ENCODE measurements at regions of chr1 and their contacts with region 1.

Region 1: DNA sequence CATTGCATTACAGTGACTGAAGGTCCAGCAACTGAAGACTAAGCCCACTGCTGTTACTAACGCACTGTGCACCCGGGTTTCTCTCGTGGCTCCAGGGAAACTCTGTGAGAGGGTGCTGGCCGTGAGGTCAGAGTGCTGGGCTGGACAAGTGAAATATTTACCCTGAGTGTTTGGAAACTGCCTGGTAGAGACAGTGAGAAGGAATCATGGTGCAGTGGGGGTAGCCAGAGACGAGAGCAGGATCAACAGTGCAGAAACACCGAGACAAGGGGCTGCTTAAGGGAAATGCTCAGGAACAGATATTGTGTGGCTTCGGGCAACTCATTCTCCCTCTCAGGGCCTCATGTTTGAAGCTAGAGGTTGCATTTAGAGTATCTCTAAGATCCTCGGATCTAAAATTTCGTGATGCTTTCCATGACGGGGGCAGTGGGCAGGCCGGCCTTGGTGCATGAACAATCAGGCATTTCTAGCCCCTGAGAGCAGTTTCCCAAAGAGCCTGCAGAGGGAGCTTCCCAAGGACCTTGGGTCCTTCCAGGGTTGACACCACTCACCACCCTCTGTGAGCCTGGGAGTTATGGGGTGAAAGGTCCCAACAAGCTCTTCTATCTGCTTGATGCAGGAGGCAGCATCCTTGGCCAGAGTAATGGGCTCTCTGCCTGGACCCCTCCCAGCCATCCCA is 9.7 kb downstream of the CD2 start:
- DNase-seq: peak in 3 of 5 donors; percentile 39 to 80 (median 43)
- H3K4me3 ChIP-seq: peak overlapping the region; percentile 10 to 27
- H3K4me3 Mint-ChIP-seq: peak overlapping the region; percentile 76 to 94 (median 84)
- H3K27ac ChIP-seq: peak overlapping the region; percentile 88
- H3K27ac Mint-ChIP-seq: peak overlapping the region; percentile 97 to 99 (median 98)
- H3K4me1 ChIP-seq: peaks cover 97% of the 10 kb centered on the region
- H3K4me1 Mint-ChIP-seq: peaks cover 79 to 100% (median 88%) of the 10 kb centered on the region in 4 donors
- H3K27me3 ChIP-seq: no peaks in the 10 kb centered on the region
- H3K27me3 Mint-ChIP-seq: no peaks in the 10 kb centered on the region

Region 2: DNA sequence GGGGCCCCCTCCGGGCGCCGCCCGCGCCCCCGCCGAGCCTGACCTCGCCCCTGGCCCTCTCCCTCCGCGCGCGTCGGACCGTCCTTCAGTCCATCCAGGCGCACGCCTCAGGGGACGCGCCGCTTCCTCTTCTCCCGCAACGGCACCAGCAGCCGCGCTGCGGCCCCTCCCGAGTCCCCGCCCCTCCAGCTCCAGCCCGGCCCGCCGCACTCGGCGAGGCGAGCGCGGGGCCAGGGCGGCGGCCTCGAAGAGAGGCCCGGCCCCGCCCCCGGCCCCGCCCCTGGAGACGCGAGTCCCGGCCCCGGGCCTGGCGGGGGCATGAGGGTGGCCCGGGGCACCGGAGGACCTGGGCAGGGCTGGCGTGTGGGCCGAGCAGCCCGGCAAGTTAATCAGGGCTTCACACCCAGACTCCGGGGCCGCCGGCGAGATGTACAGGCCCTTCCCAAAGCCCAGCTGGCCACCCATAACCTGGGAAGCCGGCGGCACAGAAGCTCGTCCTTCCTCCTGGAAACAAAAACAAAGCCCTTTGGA is 96.3 kb before region 1 on chr1 and contains the start of gene IGSF3:
- CTCF ChIA-PET with region 1: no interaction called
- POLR2A ChIA-PET with region 1: no interaction called
- intact Hi-C with region 1: no loop called
- DNase-seq: peak; percentile 10 to 41 (median 19)
- H3K4me3 ChIP-seq: peak within 1 kb of the TSS; percentile 64 to 67
- H3K4me3 Mint-ChIP-seq: peak within 1 kb of the TSS; percentile 79 to 86 (median 82)
- H3K27ac ChIP-seq: no peak within 1 kb of the TSS
- H3K27ac Mint-ChIP-seq: peak within 1 kb of the TSS in 4 of 7 donors; percentile 14 to 58 (median 50)
- H3K4me1 ChIP-seq: peaks cover 9% of the 10 kb centered on the region
- H3K4me1 Mint-ChIP-seq: peaks cover 7 to 18% (median 10%) of the 10 kb centered on the region in 4 donors
- H3K27me3 ChIP-seq: peaks cover 12% of the 10 kb centered on the region
- H3K27me3 Mint-ChIP-seq: peaks cover 19 to 24% of the 10 kb centered on the region in 2 donors
- total RNA-seq, gene IGSF3: 0.06 TPM in 1 of 2 experiments, not detected in the other

Region 3: DNA sequence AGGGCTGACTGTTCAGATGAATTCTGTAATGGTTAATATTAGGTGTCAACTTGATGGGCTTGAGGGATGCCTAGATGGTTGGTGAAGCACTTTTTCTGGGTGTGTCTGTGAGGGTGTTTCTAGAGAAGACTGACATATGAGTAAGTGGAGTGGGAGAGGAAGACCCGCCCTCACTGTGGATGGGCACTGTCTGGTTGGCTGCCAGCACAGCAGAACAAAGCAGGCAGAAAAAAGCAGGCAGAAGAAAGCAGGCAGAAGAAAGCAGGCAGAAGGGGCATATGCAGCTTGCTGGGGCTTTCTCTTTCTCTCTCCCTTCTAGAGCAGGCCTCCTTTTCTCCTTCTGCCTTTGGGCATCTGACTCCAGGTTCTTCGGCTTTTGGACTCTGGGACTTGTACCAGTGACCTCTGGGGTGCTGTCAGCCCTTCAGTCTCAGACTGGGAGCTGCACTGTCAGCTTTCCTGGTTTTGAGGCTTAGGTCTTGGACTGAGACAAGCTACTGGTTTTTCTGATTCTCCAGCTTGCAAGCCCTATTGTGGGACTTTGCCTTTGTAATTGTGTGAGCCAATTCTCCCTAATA is 52.6 kb before region 1 on chr1:
- CTCF ChIA-PET with region 1: no interaction called
- POLR2A ChIA-PET with region 1: no interaction called
- intact Hi-C with region 1: no loop called
- DNase-seq: no peak
- H3K4me3 ChIP-seq: no peak overlapping the region
- H3K4me3 Mint-ChIP-seq: no peak overlapping the region
- H3K27ac ChIP-seq: no peak overlapping the region
- H3K27ac Mint-ChIP-seq: no peak overlapping the region
- H3K4me1 ChIP-seq: no peaks in the 10 kb centered on the region
- H3K4me1 Mint-ChIP-seq: peaks cover 0 to 2% (median 0%) of the 10 kb centered on the region in 4 donors
- H3K27me3 ChIP-seq: peaks cover 4% of the 10 kb centered on the region
- H3K27me3 Mint-ChIP-seq: peaks cover 8 to 19% of the 10 kb centered on the region in 2 donors

Region 4: DNA sequence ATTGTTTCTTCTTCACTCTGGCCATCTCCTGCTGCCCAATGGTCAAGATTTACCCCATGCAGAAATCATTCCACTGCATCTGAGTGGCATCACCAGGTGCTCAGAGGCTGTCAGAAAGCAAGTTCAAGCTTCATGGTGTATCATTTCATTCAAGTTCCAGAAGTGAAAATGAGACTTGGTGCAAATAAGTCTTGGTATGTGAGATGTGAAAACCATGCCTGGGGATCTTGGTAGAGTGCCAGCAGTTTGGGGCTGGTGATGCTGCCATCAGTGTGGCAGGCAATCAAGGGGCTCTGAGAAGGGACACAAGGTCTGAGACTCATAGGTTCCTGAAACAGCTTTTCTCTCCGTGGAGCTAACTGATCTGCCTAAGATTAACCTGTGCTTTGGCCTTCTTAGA is 42.3 kb after region 1 on chr1:
- CTCF ChIA-PET with region 1: interaction called, 276 read pairs
- POLR2A ChIA-PET with region 1: interaction called, 1,208 read pairs
- intact Hi-C with region 1: no loop called
- DNase-seq: peak in 4 of 5 donors; percentile 57 to 79 (median 58)
- H3K4me3 ChIP-seq: peak overlapping the region in 1 of 2 donors; percentile 29
- H3K4me3 Mint-ChIP-seq: peak overlapping the region; percentile 67 to 96 (median 85)
- H3K27ac ChIP-seq: peak overlapping the region; percentile 80
- H3K27ac Mint-ChIP-seq: peak overlapping the region; percentile 89 to 99 (median 98)
- H3K4me1 ChIP-seq: peaks cover 97% of the 10 kb centered on the region
- H3K4me1 Mint-ChIP-seq: peaks cover 78 to 97% (median 84%) of the 10 kb centered on the region in 4 donors
- H3K27me3 ChIP-seq: no peaks in the 10 kb centered on the region
- H3K27me3 Mint-ChIP-seq: no peaks in the 10 kb centered on the region

Region 5: DNA sequence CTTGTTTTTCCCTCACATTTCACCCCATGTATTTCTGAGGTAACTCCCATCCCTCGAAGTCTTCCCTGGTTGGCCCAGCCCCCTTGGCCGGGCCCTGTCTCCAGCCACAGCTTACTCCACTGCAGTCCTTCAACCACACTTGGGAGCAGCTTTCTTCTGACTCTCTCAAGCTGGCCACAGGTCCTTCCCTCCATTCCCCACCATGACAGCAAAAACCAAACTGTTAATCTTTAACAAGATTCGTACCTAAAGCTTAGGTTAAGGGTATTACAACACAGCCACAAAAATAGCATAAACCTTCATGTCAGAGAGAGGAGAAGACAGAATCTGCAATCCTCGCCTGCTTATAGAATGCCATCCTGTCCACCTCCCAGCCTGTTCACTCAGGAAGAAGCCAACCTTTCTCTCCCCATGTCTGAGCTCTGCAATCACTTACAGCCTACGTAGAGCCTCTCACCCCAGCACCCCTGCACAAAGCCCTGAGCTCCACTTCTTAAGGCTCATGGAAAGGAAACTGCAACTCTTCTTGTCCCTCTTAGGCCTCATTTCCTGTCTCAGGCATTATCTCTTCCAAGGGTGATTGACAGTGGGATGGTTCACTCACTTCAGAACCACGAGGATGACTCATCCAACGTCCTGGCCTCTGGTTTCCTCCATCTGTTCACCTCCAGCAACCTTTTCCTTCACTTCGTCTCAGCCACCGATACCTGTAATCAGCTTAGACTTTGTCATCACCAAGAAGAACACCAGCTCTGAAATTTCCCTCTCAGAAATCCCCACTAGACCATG is 63.1 kb after region 1 on chr1:
- CTCF ChIA-PET with region 1: interaction called, 4 read pairs
- POLR2A ChIA-PET with region 1: interaction called, 17 read pairs
- intact Hi-C with region 1: no loop called
- DNase-seq: peak in 3 of 5 donors; percentile 23 to 84 (median 38)
- H3K4me3 ChIP-seq: no peak overlapping the region
- H3K4me3 Mint-ChIP-seq: peak overlapping the region in 4 of 8 donors; percentile 48 to 66 (median 54)
- H3K27ac ChIP-seq: peak overlapping the region; percentile 27
- H3K27ac Mint-ChIP-seq: peak overlapping the region; percentile 71 to 90 (median 88)
- H3K4me1 ChIP-seq: peaks cover 21% of the 10 kb centered on the region
- H3K4me1 Mint-ChIP-seq: peaks cover 16 to 31% (median 24%) of the 10 kb centered on the region in 4 donors
- H3K27me3 ChIP-seq: no peaks in the 10 kb centered on the region
- H3K27me3 Mint-ChIP-seq: no peaks in the 10 kb centered on the region